Naive thymus-derived CD8-positive, alpha-beta T cell (primary cell): ENCODE measurements at regions of chr4 and their contacts with region 1.

Region 1: DNA sequence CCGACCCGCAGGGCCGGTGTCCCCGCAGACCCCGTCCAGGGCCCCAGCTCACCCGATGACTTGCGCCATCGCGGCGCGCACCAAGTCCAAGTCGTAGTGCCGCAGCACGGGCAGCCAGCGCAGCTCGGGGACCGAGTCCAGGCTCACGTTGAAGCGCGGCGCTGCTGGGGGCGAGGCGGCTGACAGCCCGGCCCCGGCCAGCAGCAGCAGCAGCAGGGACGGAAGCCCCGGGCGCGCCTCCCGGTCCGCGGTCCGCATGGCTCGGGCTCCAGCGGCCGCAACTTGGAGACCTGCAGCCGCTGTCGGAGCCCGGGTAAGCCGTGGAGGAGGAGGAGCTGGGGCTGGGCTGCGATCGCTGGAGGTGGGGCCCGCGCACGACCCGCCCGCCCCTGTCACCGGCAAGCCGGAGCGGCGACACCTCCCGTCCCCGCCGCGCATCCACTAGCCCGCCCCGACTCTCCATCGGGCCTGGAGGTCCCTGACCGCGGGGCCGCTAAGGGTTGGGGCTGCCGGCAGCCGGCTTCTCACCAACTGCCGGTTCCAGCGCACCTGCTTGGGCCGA is at the start of gene NAAA:
- DNase-seq: peak; percentile 60 to 89 (median 74)
- ATAC-seq: peak; percentile 85
- H3K4me3 Mint-ChIP-seq: peak within 1 kb of the TSS; percentile 94 to 99 (median 97)
- H3K27ac Mint-ChIP-seq: peak within 1 kb of the TSS; percentile 70 to 99 (median 96)
- H3K4me1 Mint-ChIP-seq: peaks cover 6 to 30% (median 24%) of the 10 kb centered on the region in 4 donors
- H3K27me3 Mint-ChIP-seq: no peaks in the 10 kb centered on the region
- polyA plus RNA-seq, gene NAAA: 63.1 to 87.9 (median 63.4) TPM

Region 2: DNA sequence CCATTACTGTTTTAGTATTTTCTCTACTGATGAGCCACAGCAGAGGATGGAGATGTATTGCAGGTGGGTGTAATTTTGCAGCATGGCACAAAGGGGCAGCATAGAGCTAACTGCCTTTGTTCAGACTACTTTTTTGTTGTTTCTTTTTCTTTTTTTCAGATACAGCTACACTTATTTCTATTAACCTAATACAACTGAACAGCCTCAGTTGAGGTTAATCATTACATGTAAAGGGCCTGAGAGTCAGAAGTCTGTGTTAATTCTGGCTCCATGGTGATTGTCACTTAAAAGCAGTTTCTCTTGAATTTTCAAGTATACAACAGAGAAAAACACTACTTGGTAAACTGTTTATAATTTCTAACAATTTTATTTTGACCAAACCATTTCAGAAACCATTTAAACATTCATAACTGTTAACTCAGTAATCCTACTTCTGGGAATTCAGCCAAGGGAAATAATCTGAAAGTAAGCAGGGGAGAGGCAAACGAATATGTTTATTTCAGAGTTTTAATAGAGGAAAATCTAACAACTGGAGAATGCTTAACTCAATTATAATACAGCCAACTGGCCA is 24.6 kb before region 1 on chr4:
- POLR2A ChIA-PET with region 1: interaction called, 12 read pairs
- DNase-seq: peak in 6 of 10 donors; percentile 9 to 63 (median 26)
- ATAC-seq: peak; percentile 78 to 82
- H3K4me3 Mint-ChIP-seq: no peak overlapping the region
- H3K27ac Mint-ChIP-seq: peak overlapping the region in 4 of 10 donors; percentile 19 to 69 (median 38)
- H3K4me1 Mint-ChIP-seq: no peaks in the 10 kb centered on the region
- H3K27me3 Mint-ChIP-seq: no peaks in the 10 kb centered on the region

Region 3: DNA sequence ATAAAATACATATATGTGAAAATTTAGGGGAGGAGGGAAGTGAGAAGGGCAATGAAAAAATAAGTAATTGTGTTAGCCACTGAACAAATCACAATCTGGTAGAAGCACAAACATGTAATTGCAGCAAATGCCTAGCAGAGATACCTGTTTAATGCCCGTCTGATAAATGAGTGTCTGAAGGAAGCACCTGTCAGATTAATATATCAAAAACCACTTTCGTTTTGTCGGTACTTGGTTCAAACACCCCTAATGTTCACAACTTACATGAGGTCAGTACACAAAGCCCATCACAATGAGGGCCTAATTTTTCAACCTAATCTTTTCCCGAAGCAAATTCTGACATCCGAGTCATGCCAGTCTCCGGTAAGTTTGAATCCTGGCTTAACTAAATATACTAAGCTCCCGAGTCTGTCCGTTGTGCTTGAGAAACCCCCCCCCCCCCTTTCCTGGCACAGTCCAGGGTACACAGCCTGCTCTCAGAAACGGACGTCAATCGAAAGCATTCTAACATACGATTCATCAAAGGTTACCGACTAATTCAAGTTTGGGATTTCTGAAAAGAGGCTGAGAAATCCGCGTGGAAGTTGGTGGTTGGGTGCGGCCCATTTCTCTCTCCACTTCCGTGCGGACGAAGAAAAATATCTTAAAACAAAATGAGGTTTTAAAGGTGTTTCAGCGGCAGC is 49.2 kb after region 1 on chr4:
- POLR2A ChIA-PET with region 1: interaction called, 30 read pairs
- DNase-seq: peak in 2 of 10 donors; percentile 3 to 14
- ATAC-seq: no peak
- H3K4me3 Mint-ChIP-seq: peak overlapping the region; percentile 89 to 98 (median 96)
- H3K27ac Mint-ChIP-seq: peak overlapping the region; percentile 88 to 98 (median 94)
- H3K4me1 Mint-ChIP-seq: peaks cover 22 to 36% (median 30%) of the 10 kb centered on the region in 4 donors
- H3K27me3 Mint-ChIP-seq: peaks cover 0 to 10% (median 0%) of the 10 kb centered on the region in 5 donors

Region 4: GRCh38 chr4:76148142-76148865 is 207.5 kb after region 1 on chr4 and contains the start of gene NUP54:
- POLR2A ChIA-PET with region 1: interaction called, 10 read pairs
- DNase-seq: peak; percentile 80 to 96 (median 94)
- ATAC-seq: peak; percentile 97
- H3K4me3 Mint-ChIP-seq: peak within 1 kb of the TSS; percentile 92 to 100 (median 95)
- H3K27ac Mint-ChIP-seq: peak within 1 kb of the TSS; percentile 84 to 100 (median 96)
- H3K4me1 Mint-ChIP-seq: peaks cover 8 to 47% (median 35%) of the 10 kb centered on the region in 4 donors
- H3K27me3 Mint-ChIP-seq: no peaks in the 10 kb centered on the region
- polyA plus RNA-seq, gene NUP54: 36.8 to 40.0 (median 37.8) TPM